ENCODE measurements at regions of chr16 and their contacts with region 1.

Region 1: GRCh38 chr16:31265329-31266245 is 5.8 kb downstream of the ITGAM start:
- DNase-seq: peak; percentile 79
- ATAC-seq: peak; percentile 95
- H3K4me3 ChIP-seq: peak overlapping the region; percentile 32; the same call in 1 of the 2 replicates
- H3K27ac ChIP-seq: peak overlapping the region; percentile 88
- H3K4me1 ChIP-seq: peaks cover 32% of the 10 kb centered on the region
- H3K27me3 ChIP-seq: no peaks in the 10 kb centered on the region
- CTCF ChIP-seq: peak; percentile 20 to 21 (median 21); a peak in 2 of 6 replicates
- EP300 ChIP-seq: peak in 1 of 2 experiments; percentile 51; a peak in 1 of 4 replicates
- POLR2A ChIP-seq: no peak; the same call in 1 of the 2 replicates
- RAD21 ChIP-seq: peak; percentile 25; the same call in 1 of the 2 replicates

Region 2: GRCh38 chr16:31286421-31287032 is 20.9 kb after region 1 on chr16:
- CTCF ChIA-PET with region 1: interaction called, 3 read pairs
- POLR2A ChIA-PET with region 1: interaction called, 3 read pairs
- RAD21 ChIA-PET with region 1: no interaction called
- SMC1A ChIA-PET with region 1: interaction called, 4 read pairs
- in situ Hi-C with region 1: no loop called
- intact Hi-C with region 1: loop called (anchors 2 kb)
- DNase-seq: peak; percentile 55
- ATAC-seq: peak; percentile 94
- H3K4me3 ChIP-seq: peak overlapping the region; percentile 18; the same call in 1 of the 2 replicates
- H3K27ac ChIP-seq: no peak overlapping the region
- H3K4me1 ChIP-seq: peaks cover 18% of the 10 kb centered on the region
- H3K27me3 ChIP-seq: no peaks in the 10 kb centered on the region
- CTCF ChIP-seq: no peak
- EP300 ChIP-seq: no peak
- POLR2A ChIP-seq: no peak
- RAD21 ChIP-seq: no peak

Region 3: DNA sequence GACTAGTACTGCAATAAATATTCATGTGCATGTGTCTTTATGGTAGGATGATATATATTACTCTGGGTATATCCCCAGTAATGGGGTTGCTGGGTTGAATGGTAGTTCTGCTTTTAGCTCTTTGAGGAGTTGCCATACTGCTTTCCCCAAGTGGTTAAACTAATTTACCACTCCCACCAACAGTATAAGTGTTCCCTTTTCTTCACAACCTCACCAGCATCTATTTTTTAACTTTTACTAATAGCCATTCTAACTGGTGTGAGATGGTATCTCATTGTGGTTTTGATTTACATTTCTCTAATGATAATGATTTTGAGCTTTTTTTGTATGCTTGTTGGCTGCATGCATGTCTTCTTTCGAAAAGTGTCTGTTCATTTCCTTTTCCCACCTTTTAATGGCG is 27.1 kb after region 1 on chr16:
- CTCF ChIA-PET with region 1: no interaction called
- POLR2A ChIA-PET with region 1: no interaction called
- RAD21 ChIA-PET with region 1: no interaction called
- SMC1A ChIA-PET with region 1: interaction called, 15 read pairs
- in situ Hi-C with region 1: no loop called
- intact Hi-C with region 1: loop called (anchors 2 kb)
- DNase-seq: peak; percentile 28
- ATAC-seq: no peak
- H3K4me3 ChIP-seq: no peak overlapping the region
- H3K27ac ChIP-seq: no peak overlapping the region
- H3K4me1 ChIP-seq: 0 out of 2 replicates have a peak, but pooled peaks cover 3% of the 10 kb centered on the region
- H3K27me3 ChIP-seq: no peaks in the 10 kb centered on the region
- CTCF ChIP-seq: no peak
- EP300 ChIP-seq: no peak
- POLR2A ChIP-seq: no peak
- RAD21 ChIP-seq: no peak

Region 4: GRCh38 chr16:31354394-31355291 is 89.1 kb after region 1 on chr16 and contains the start of gene ITGAX:
- CTCF ChIA-PET with region 1: no interaction called
- POLR2A ChIA-PET with region 1: interaction called, 3 read pairs
- RAD21 ChIA-PET with region 1: interaction called, 4 read pairs
- SMC1A ChIA-PET with region 1: interaction called, 3 read pairs
- in situ Hi-C with region 1: no loop called
- intact Hi-C with region 1: loop called (anchors 5 kb)
- DNase-seq: peak; percentile 70
- ATAC-seq: peak; percentile 85
- H3K4me3 ChIP-seq: peak within 1 kb of the TSS; percentile 35; the same call in 1 of the 2 replicates
- H3K27ac ChIP-seq: peak within 1 kb of the TSS; percentile 79
- H3K4me1 ChIP-seq: peaks cover 55% of the 10 kb centered on the region
- H3K27me3 ChIP-seq: no peaks in the 10 kb centered on the region
- CTCF ChIP-seq: no peak
- EP300 ChIP-seq: peak in 1 of 2 experiments; percentile 74; a peak in 2 of 4 replicates
- POLR2A ChIP-seq: peak; percentile 45
- RAD21 ChIP-seq: no peak
- polyA plus RNA-seq, gene ITGAX: 1.6 to 3.2 TPM

Region 5: GRCh38 chr16:31367853-31368252 is 102.3 kb after region 1 on chr16:
- CTCF ChIA-PET with region 1: no interaction called
- POLR2A ChIA-PET with region 1: no interaction called
- RAD21 ChIA-PET with region 1: no interaction called
- SMC1A ChIA-PET with region 1: no interaction called
- in situ Hi-C with region 1: no loop called
- intact Hi-C with region 1: no loop called
- DNase-seq: no peak
- ATAC-seq: no peak
- H3K4me3 ChIP-seq: no peak overlapping the region
- H3K27ac ChIP-seq: no peak overlapping the region
- H3K4me1 ChIP-seq: peaks cover 6% of the 10 kb centered on the region
- H3K27me3 ChIP-seq: no peaks in the 10 kb centered on the region
- CTCF ChIP-seq: no peak
- EP300 ChIP-seq: no peak
- POLR2A ChIP-seq: no peak
- RAD21 ChIP-seq: no peak